T-cell (primary cell): ENCODE measurements at regions of chr1 and their contacts with region 1.

Region 1: DNA sequence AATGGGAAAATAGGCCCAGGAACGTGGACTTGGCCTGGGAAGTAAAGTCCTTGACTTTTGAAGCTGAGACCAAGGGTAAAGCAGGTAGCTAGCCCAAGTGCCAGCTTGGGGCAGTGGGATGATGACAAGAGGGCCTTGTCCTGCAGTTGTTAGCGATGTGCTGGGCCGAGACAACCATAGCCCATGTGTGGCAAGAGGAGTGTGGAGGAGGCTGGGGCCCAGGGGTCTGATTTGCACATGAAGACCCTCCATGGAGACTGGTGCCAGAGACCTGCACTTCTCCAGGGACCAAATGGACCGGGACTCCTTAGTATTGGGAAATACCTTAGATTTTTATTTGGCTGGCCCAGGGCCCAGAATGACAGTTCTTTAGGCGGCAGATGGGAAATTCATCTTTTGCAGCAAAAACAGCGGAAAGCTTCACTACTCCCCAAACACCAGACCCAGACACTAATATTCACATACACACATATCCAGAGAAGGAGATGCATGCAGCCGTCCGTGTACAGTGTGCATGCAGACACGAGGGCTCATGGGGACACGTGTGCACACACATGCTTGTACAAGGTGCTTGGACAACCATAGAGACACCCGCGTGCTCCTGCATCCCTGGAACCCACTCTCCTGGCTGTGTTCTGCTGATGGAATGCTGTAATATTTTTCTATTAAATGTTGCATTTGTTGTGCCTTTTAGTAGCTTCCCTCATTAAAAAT is 78.1 kb upstream of the CSF3R start:
- DNase-seq: no peak
- ATAC-seq: no peak
- H3K4me3 ChIP-seq: no peak overlapping the region
- H3K4me3 Mint-ChIP-seq: no peak overlapping the region
- H3K27ac ChIP-seq: no peak overlapping the region
- H3K27ac Mint-ChIP-seq: no peak overlapping the region
- H3K4me1 ChIP-seq: no peaks in the 10 kb centered on the region
- H3K4me1 Mint-ChIP-seq: peaks cover 0 to 5% (median 0%) of the 10 kb centered on the region in 3 donors
- H3K27me3 ChIP-seq: peaks cover 0 to 10% of the 10 kb centered on the region in 2 experiments
- H3K27me3 Mint-ChIP-seq: peaks cover 7 to 14% of the 10 kb centered on the region in 2 donors

Region 2: GRCh38 chr1:35587736-35588135 is 973.0 kb before region 1 on chr1:
- CTCF ChIA-PET with region 1: interaction called in 1 of 2 experiments, 10 read pairs
- POLR2A ChIA-PET with region 1: no interaction called
- DNase-seq: no peak
- ATAC-seq: no peak
- H3K4me3 ChIP-seq: no peak overlapping the region
- H3K4me3 Mint-ChIP-seq: no peak overlapping the region
- H3K27ac ChIP-seq: no peak overlapping the region
- H3K27ac Mint-ChIP-seq: no peak overlapping the region
- H3K4me1 ChIP-seq: peaks cover 0 to 4% of the 10 kb centered on the region in 2 experiments
- H3K4me1 Mint-ChIP-seq: peaks cover 0 to 5% (median under 1%) of the 10 kb centered on the region in 3 donors
- H3K27me3 ChIP-seq: no peaks in the 10 kb centered on the region
- H3K27me3 Mint-ChIP-seq: no peaks in the 10 kb centered on the region

Region 3: DNA sequence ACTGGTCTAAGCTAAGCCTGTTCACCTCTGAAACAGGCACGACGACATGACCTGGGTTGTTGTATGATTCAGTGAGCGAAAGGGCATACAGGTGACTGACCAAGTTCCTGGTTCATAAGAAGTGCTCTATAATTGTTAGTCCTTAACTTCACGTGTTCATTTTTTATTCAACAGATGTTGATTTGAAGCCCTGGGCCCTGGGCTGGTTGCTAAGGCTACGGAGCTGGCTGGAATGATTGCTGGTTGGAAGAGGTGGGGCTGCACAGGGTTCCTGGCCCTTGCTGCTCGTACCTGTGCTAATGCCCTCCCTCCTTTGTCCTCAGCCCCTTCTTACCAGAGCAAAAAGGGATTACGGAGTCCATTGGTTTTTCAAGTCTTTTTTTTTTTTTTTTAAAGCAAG is 33.2 kb after region 1 on chr1:
- CTCF ChIA-PET with region 1: no interaction called
- POLR2A ChIA-PET with region 1: no interaction called
- DNase-seq: no peak
- ATAC-seq: no peak
- H3K4me3 ChIP-seq: no peak overlapping the region
- H3K4me3 Mint-ChIP-seq: no peak overlapping the region
- H3K27ac ChIP-seq: no peak overlapping the region
- H3K27ac Mint-ChIP-seq: no peak overlapping the region
- H3K4me1 ChIP-seq: no peaks in the 10 kb centered on the region
- H3K4me1 Mint-ChIP-seq: peaks cover 0 to 3% (median 0%) of the 10 kb centered on the region in 3 donors
- H3K27me3 ChIP-seq: peaks cover 0 to 55% of the 10 kb centered on the region in 2 experiments
- H3K27me3 Mint-ChIP-seq: peaks cover 34 to 52% of the 10 kb centered on the region in 2 donors

Region 4: DNA sequence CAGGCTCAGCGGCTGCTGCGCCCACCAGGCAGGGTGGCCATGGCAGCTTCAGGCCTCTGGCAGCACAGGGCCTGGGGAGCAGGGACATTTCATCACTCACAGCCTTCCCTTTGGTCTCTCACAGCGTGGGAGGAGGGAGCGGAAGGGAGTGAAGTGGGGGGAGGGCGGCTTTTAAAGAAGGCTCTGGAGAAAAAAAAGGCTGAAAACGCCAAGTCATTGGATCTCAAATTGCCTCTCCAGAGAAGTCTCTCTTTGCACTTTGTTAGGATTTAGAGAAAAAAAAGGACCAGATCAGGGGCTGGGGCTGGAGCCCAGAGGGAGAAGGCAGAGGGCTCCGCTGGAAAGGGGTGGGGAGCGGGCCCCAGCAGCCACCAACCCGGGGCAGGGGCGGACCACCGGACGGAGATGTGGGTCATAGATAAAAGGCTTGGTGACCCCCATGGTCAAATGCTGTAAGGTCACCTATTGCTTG is 263.6 kb after region 1 on chr1:
- CTCF ChIA-PET with region 1: no interaction called
- POLR2A ChIA-PET with region 1: no interaction called
- DNase-seq: no peak
- ATAC-seq: no peak
- H3K4me3 ChIP-seq: no peak overlapping the region
- H3K4me3 Mint-ChIP-seq: no peak overlapping the region
- H3K27ac ChIP-seq: no peak overlapping the region
- H3K27ac Mint-ChIP-seq: no peak overlapping the region
- H3K4me1 ChIP-seq: no peaks in the 10 kb centered on the region
- H3K4me1 Mint-ChIP-seq: no peaks in the 10 kb centered on the region
- H3K27me3 ChIP-seq: peaks cover 2 to 38% of the 10 kb centered on the region in 2 experiments
- H3K27me3 Mint-ChIP-seq: peaks cover 20 to 26% of the 10 kb centered on the region in 2 donors